HEK293 (cell line): ENCODE measurements at regions of chr20 and their contacts with region 1.

Region 1: DNA sequence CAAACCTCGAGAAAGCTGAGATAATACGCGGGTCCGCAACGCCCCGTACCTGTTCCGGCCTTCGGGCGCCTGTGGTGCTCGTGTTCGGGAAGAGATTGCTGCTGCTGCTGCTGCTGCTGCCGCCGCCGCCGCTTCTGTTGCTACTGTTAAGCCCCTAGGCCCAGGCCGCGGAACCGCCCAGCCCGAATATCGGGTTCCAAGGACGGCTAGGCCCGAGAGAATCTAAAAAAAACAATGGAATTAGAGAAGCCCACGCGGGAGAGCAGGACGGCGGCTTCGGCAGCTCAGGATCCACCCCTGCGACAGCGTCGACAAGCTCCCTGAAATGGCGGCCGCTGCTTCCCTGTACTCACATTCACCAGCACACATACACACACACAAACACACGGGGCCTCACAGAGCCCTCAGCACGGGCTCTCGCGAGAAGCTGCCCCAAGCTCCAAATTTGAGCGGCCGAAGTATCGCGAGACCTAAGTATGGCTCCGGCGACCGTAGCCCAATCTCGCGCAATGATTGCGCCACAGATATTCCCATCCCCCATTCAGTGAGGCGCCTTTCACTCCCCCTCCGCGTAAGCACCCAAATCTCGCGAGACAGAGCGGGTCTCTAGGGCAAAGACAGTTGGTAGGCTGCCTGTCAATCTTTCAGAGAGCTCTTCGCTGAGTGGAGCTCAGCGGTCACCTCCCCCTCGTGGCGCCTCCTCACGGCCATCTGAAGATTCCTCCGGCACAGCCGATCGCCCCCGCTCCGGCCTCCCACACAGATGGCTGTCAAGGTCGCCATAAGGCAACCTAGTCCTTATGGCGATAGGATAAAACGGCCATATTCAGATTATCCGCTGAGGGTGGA is at the start of gene RBM39:
- H3K4me3 ChIP-seq: peak within 1 kb of the TSS; percentile 91
- H3K27ac ChIP-seq: peak within 1 kb of the TSS; percentile 100
- H3K4me1 ChIP-seq: no peaks in the 10 kb centered on the region
- CTCF ChIP-seq: peak; percentile 91

Region 2: GRCh38 chr20:35478804-35479472 is 263.2 kb before region 1 on chr20:
- CTCF ChIA-PET with region 1: no interaction called
- POLR2A ChIA-PET with region 1: no interaction called
- H3K4me3 ChIP-seq: no peak overlapping the region
- H3K27ac ChIP-seq: no peak overlapping the region
- H3K4me1 ChIP-seq: no peaks in the 10 kb centered on the region
- CTCF ChIP-seq: no peak

Region 3: GRCh38 chr20:35619196-35620095 is 122.7 kb before region 1 on chr20:
- CTCF ChIA-PET with region 1: interaction called, 4 read pairs
- POLR2A ChIA-PET with region 1: interaction called, 20 read pairs
- H3K4me3 ChIP-seq: peak overlapping the region; percentile 51
- H3K27ac ChIP-seq: no peak overlapping the region
- H3K4me1 ChIP-seq: no peaks in the 10 kb centered on the region
- CTCF ChIP-seq: peak; percentile 93

Region 4: DNA sequence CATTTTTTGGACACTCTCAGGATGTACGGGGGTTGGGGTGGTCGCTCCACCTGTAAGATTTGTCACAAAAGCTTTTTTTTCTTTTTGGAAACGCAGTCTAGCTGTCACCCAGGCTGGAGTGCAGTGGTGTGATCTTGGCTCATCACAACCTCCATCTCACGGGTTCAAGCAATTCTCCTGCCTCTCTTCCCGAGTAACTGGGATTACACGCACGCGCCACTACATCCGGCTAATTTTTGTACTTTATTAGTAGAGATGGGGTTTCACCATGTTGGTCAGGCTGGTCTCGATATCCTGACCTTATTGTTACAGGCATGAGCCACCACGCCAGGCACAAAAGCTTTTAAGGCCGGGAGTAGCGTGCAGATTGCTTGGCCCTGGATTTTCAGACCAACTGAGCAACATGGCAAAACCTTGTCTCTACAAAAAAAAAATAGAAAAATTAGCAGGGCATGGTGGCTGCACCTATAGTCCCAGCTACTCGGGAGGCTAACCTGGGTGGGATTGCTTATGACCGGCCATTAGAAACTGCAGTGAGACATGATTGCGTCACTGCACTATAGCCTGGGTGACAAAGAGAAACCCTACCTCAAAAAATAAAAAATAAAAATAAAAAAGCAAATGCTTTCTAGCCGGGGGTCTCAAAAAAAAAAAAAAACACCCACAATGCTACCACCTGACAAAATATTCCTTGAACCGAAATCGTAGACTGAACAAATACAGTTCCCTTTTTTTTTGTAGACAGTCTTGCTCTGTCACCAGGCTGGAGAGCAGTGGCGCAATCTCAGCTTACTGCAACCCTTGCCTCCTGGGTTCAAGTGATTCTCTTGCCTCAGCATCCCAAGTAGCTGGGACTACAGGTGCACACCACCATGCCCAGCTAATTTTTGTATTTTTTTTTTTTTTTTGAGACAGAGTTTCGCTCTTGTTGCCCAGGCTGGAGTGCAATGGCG is 15.1 kb before region 1 on chr20:
- CTCF ChIA-PET with region 1: interaction called, 4 read pairs
- POLR2A ChIA-PET with region 1: interaction called, 21 read pairs
- H3K4me3 ChIP-seq: no peak overlapping the region
- H3K27ac ChIP-seq: no peak overlapping the region
- H3K4me1 ChIP-seq: no peaks in the 10 kb centered on the region
- CTCF ChIP-seq: no peak

Region 5: GRCh38 chr20:35871311-35871771 is 129.2 kb after region 1 on chr20:
- CTCF ChIA-PET with region 1: interaction called, 6 read pairs
- POLR2A ChIA-PET with region 1: interaction called, 14 read pairs
- H3K4me3 ChIP-seq: no peak overlapping the region
- H3K27ac ChIP-seq: peak overlapping the region; percentile 56; the same call in 1 of the 2 replicates
- H3K4me1 ChIP-seq: peaks cover 9% of the 10 kb centered on the region
- CTCF ChIP-seq: no peak

Region 6: GRCh38 chr20:35917077-35917476 is 175.0 kb after region 1 on chr20:
- CTCF ChIA-PET with region 1: no interaction called
- POLR2A ChIA-PET with region 1: no interaction called
- H3K4me3 ChIP-seq: no peak overlapping the region
- H3K27ac ChIP-seq: no peak overlapping the region
- H3K4me1 ChIP-seq: no peaks in the 10 kb centered on the region
- CTCF ChIP-seq: no peak

Region 7: DNA sequence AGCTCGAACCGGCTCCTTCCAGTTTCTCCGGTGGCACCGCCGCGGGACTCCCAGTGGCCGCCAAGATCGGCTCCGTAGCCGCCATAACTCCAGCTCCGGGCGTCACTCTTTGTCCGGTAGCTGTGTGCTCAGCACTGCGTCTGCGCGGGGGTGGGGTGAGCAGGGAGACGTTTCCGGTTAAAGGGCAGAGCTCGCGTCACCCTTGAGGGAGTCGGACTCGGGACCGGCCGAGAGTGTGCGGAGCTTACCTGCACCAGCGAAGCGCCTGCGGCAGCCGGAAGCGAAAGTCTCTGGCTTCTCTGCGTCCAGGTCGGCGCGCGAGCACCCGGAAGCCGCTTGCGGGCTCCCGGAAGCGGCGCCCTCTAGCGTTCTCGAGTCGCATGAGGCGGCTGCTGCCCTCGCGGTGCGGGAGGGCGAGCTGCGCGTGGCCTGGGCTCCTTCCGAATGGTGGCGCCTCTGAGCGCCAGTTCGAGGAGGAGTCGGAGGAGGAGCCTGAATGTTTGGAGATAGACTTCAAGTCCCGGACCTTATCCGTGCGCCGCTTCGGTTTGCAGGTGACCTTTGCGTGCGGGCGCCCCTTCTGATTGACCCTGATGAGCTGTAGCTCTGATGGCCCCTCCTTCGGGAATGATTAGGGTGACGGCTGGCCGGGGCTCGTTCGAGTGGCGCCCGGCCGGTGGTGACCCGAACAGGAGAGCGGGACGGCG is 212.2 kb after region 1 on chr20 and contains the start of gene SCAND1:
- CTCF ChIA-PET with region 1: interaction called, 6 read pairs
- POLR2A ChIA-PET with region 1: interaction called, 47 read pairs
- H3K4me3 ChIP-seq: peak within 1 kb of the TSS; percentile 77
- H3K27ac ChIP-seq: peak within 1 kb of the TSS; percentile 89
- H3K4me1 ChIP-seq: no peaks in the 10 kb centered on the region
- CTCF ChIP-seq: peak; percentile 100